ENCODE measurements at regions of chr1 and their contacts with region 1.

Region 1: DNA sequence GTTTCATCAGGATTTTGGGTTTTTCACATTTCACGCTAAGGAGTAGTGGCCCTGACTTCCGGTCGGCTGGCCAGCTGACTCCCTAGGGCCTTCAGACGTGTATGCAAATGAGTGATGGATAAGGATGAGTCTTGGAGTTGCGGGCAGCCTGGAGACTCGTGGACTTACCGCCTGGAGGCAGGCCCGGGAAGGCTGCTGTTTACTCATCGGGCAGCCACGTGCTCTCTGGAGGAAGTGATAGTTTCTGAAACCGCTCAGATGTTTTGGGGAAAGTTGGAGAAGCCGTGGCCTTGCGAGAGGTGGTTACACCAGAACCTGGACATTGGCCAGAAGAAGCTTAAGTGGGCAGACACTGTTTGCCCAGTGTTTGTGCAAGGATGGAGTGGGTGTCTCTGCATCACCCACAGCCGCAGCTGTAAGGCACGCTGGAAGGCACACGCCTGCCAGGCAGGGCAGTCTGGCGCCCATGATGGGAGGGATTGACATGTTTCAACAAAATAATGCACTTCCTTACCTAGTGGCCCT is 23.1 kb upstream of the TNFRSF1B start:
- DNase-seq: peak; percentile 74
- ATAC-seq: peak; percentile 64 to 87 (median 70)
- H3K4me3 ChIP-seq: no peak overlapping the region
- H3K27ac ChIP-seq: peak overlapping the region in 9 of 10 donors; percentile 4 to 93 (median 66)
- H3K4me1 ChIP-seq: peaks cover 12 to 88% (median 47%) of the 10 kb centered on the region in 9 donors
- H3K27me3 ChIP-seq: no peaks in the 10 kb centered on the region
- CTCF ChIP-seq: peak in 3 of 9 donors; percentile 17 to 37 (median 36)

Region 2: DNA sequence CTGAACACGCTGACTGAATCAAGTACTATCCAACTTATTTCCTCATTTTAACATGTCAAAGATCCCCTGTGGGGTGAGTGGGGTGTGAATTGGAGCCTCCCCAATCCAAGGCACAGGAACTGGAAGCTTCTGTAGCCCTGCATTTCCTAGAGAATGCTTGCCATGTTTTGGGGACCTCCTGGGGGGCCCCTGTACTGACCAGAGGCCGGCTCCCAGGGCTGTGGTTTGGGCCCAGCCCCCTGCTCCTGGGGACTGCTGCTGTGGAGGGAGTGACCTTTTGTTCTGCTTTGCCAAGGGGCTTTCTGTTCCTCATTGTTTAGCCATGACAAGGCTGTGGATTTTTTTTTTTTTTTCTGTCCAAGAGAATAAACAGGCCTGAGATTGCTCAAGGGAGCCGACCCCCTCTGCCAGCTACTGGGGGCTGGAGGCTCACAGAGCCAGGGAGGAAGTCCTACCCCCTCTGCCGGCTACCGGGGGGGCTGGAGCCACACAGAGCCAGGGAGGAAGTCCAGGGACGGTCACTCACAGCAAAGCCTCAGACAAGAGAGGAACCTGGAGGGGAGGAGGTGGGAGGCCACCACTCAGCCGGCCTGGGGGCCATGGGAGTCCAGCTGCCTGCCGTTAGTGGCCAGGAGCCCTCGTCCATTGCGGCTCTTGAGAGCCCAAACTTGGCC is 40.5 kb after region 1 on chr1:
- intact Hi-C with region 1: loop called in 1 of 10 experiments (anchors 5 kb)
- DNase-seq: peak; percentile 86 to 89
- ATAC-seq: peak; percentile 86 to 91 (median 90)
- H3K4me3 ChIP-seq: peak overlapping the region in 9 of 10 donors; percentile 9 to 44 (median 36)
- H3K27ac ChIP-seq: peak overlapping the region; percentile 83 to 99 (median 93)
- H3K4me1 ChIP-seq: peaks cover 20 to 100% (median 93%) of the 10 kb centered on the region in 9 donors
- H3K27me3 ChIP-seq: no peaks in the 10 kb centered on the region
- CTCF ChIP-seq: peak in 8 of 9 donors; percentile 12 to 61 (median 41)

Region 3: DNA sequence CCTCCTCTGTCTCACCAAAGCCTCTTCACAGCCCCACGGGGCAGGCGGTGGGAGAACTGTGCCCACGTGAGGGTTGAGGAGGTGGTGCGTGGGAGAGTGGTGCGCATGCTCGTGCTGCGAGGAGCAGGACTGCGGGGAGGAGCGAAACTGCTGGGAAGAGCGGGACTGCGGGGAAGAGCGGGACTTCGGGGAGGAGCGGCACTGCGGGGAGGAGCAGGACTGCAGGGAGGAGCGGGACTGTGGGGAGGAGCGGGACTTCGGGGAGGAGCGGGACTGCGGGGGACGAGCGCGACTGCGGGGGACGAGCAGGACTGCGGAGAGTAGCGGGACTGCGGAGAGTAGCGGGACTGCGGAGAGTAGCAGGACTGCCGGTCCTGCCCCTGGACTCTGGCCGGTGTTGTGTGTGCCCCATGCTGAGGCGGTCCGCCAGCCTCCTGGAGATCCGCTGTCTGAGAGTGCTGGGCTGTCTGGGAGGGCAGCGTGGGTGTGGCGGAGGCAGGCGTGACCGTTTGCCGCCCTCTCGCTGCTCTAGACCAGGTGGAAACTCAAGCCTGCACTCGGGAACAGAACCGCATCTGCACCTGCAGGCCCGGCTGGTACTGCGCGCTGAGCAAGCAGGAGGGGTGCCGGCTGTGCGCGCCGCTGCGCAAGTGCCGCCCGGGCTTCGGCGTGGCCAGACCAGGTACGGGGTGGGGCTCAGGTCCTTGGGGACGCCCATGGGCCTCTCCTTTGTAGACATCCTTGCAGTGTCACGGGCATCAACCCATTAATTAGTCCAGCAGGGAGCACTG is 47.7 kb after region 1 on chr1:
- intact Hi-C with region 1: loop called in 1 of 10 experiments (anchors 5 kb)
- DNase-seq: no peak
- ATAC-seq: peak in 1 of 8 donors; percentile 11
- H3K4me3 ChIP-seq: no peak overlapping the region
- H3K27ac ChIP-seq: no peak overlapping the region
- H3K4me1 ChIP-seq: peaks cover 0 to 59% (median 27%) of the 10 kb centered on the region in 9 donors
- H3K27me3 ChIP-seq: no peaks in the 10 kb centered on the region
- CTCF ChIP-seq: no peak

Measured in heart right ventricle (tissue), 16 donors.